Activated CD4-positive, alpha-beta memory T cell treated with anti-CD3 and anti-CD28 coated beads for 36 hours (primary cell): ENCODE measurements at regions of chr17 and their contacts with region 1.

Region 1: GRCh38 chr17:10844621-10845387 is 6.9 kb upstream of the PIRT start:
- DNase-seq: peak; percentile 79
- H3K4me3 Mint-ChIP-seq: peak overlapping the region; percentile 73
- H3K27ac Mint-ChIP-seq: no peak overlapping the region
- H3K4me1 Mint-ChIP-seq: peaks cover 7% of the 10 kb centered on the region
- H3K27me3 Mint-ChIP-seq: peaks cover 8% of the 10 kb centered on the region

Region 2: GRCh38 chr17:10631048-10631700 is 213.6 kb before region 1 on chr17:
- CTCF ChIA-PET with region 1: interaction called, 5 read pairs
- POLR2A ChIA-PET with region 1: no interaction called
- intact Hi-C with region 1: loop called (anchors 5 kb)
- DNase-seq: peak; percentile 38
- H3K4me3 Mint-ChIP-seq: no peak overlapping the region
- H3K27ac Mint-ChIP-seq: no peak overlapping the region
- H3K4me1 Mint-ChIP-seq: peaks cover 7% of the 10 kb centered on the region
- H3K27me3 Mint-ChIP-seq: no peaks in the 10 kb centered on the region

Region 3: GRCh38 chr17:10713318-10713717 is 131.5 kb before region 1 on chr17:
- CTCF ChIA-PET with region 1: no interaction called
- POLR2A ChIA-PET with region 1: no interaction called
- intact Hi-C with region 1: no loop called
- DNase-seq: no peak
- H3K4me3 Mint-ChIP-seq: no peak overlapping the region
- H3K27ac Mint-ChIP-seq: no peak overlapping the region
- H3K4me1 Mint-ChIP-seq: peaks cover 3% of the 10 kb centered on the region
- H3K27me3 Mint-ChIP-seq: no peaks in the 10 kb centered on the region

Region 4: DNA sequence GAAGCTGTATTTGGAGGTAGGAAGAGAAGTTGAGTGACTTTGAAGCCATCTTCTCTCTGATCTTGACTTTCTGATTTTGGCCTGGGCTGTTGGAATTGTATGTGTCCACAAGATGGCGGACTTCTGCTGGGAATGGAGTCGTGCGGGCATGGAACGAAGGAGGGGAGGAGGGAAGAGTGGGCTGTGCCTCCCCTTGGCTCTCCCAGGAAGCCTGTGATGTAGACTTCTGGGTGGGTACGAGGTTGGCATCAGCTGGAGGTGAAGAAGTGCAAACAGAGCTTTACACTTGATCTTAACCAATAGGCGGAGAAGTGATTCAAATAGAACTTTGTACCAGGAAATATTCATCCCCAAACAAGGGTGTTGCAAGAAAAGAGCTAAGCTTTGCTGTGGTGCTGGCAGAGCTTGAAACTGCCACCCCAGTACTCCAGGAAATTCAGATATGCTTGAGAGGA is 107.6 kb before region 1 on chr17:
- CTCF ChIA-PET with region 1: interaction called, 29 read pairs
- POLR2A ChIA-PET with region 1: no interaction called
- intact Hi-C with region 1: loop called (anchors 1 kb)
- DNase-seq: peak; percentile 49
- H3K4me3 Mint-ChIP-seq: no peak overlapping the region
- H3K27ac Mint-ChIP-seq: no peak overlapping the region
- H3K4me1 Mint-ChIP-seq: peaks cover 7% of the 10 kb centered on the region
- H3K27me3 Mint-ChIP-seq: peaks cover 6% of the 10 kb centered on the region